ENCODE measurements at regions of chr7 and their contacts with region 1.

Region 1: GRCh38 chr7:100087055-100087750 is 1.6 kb upstream of the COPS6 start:
- DNase-seq: peak; percentile 97
- H3K4me3 ChIP-seq: no peak overlapping the region
- H3K27me3 ChIP-seq: no peaks in the 10 kb centered on the region
- CTCF ChIP-seq: no peak

Region 2: GRCh38 chr7:99061001-99061776 is 1026.0 kb before region 1 on chr7:
- CTCF ChIA-PET with region 1: no interaction called
- POLR2A ChIA-PET with region 1: interaction called, 12 read pairs
- DNase-seq: no peak
- H3K4me3 ChIP-seq: no peak overlapping the region
- H3K27me3 ChIP-seq: no peaks in the 10 kb centered on the region
- CTCF ChIP-seq: no peak

Region 3: GRCh38 chr7:99997545-99998137 is 89.6 kb before region 1 on chr7:
- CTCF ChIA-PET with region 1: interaction called, 6 read pairs
- POLR2A ChIA-PET with region 1: interaction called, 22 read pairs
- DNase-seq: no peak
- H3K4me3 ChIP-seq: peak overlapping the region; percentile 14; the same call in 1 of the 2 replicates
- H3K27me3 ChIP-seq: no peaks in the 10 kb centered on the region
- CTCF ChIP-seq: peak; percentile 24; the same call in 1 of the 2 replicates